Activated CD4-positive, alpha-beta memory T cell treated with anti-CD3 and anti-CD28 coated beads for 36 hours (primary cell): ENCODE measurements at regions of chr4 and their contacts with region 1.

Region 1: DNA sequence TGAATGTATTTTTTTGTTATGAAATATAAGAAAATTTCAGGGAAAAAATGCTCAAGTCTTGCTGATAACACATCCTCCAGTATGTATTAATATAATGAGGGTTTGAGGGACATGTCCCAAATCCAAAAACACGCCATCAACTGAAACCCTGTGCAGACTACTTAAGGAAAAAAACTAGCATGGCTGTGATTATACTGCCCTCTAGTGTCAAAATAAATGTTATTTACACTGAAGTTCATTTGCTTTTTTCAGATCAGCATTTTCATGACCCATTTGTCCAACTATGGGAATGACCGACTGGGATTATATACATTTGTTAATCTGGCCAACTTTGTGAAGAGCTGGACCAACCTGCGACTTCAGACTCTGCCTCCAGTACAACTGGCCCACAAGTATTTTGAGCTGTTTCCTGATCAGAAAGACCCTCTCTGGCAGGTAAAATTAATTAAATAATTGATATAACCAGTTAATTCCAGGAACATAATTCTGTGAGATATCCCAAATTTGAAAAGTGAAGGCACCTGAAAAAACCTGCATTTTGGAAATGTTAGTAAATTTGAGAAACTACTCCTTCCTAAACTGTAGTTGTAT is 128.5 kb downstream of the PRSS12 start:
- DNase-seq: no peak
- H3K4me3 Mint-ChIP-seq: no peak overlapping the region
- H3K27ac Mint-ChIP-seq: no peak overlapping the region
- H3K4me1 Mint-ChIP-seq: no peaks in the 10 kb centered on the region
- H3K27me3 Mint-ChIP-seq: peaks cover 6% of the 10 kb centered on the region

Region 2: DNA sequence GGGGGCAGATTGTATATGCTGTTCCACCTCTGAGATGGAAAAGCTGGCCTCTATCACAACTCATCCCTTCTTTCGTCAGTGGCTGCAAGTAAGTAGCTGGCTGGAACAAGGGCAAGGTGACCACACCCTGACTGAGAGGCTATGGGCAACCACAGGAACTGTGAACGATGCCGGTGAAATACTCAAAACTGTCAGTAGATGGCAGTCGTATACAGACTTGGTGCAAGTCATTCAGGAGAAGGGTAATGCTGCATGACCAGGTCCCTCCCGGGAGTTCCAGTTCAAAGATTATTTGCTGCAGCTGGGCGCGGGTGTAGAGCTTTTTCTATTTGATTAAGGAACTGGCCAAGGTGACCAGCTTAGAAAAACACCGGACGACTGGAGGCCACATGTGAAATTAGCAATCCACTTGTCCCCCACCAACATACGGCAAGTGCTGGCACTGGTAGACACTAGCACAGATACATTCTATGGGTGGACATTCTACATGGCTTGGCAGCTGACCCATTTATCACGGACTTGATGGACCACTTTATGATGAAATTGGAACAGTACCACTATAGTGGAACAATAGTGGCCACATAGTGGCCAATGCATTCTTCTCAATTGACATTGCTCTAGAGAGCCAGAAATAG is 1865.6 kb before region 1 on chr4:
- CTCF ChIA-PET with region 1: interaction called, 3 read pairs
- POLR2A ChIA-PET with region 1: no interaction called
- intact Hi-C with region 1: loop called (anchors 10 kb)
- DNase-seq: peak; percentile 24
- H3K4me3 Mint-ChIP-seq: no peak overlapping the region
- H3K27ac Mint-ChIP-seq: no peak overlapping the region
- H3K4me1 Mint-ChIP-seq: no peaks in the 10 kb centered on the region
- H3K27me3 Mint-ChIP-seq: no peaks in the 10 kb centered on the region

Region 3: DNA sequence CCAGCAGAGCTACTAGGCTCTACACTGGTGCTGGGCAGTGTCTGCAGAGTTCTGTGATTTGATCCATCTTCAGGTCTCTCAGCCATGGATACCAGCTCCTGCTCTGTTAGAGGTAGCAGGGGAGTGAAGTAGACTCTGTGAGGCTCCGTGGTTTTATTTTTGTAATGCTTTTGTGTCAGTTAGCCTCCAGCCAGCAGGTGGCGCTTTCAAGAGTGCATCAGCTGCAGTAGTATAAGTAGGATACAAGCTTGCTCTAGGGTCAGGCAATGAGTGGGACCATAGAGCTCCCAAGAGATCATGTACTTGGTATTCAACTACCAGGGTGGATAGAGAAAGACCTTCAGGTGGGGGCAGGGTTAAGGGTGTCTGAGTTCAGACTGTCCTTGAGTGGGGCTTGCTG is 776.4 kb before region 1 on chr4:
- CTCF ChIA-PET with region 1: interaction called, 3 read pairs
- POLR2A ChIA-PET with region 1: no interaction called
- intact Hi-C with region 1: loop called (anchors 5 kb)
- DNase-seq: peak; percentile 24
- H3K4me3 Mint-ChIP-seq: no peak overlapping the region
- H3K27ac Mint-ChIP-seq: no peak overlapping the region
- H3K4me1 Mint-ChIP-seq: no peaks in the 10 kb centered on the region
- H3K27me3 Mint-ChIP-seq: no peaks in the 10 kb centered on the region

Region 4: GRCh38 chr4:117971403-117971802 is 252.9 kb before region 1 on chr4:
- CTCF ChIA-PET with region 1: no interaction called
- POLR2A ChIA-PET with region 1: no interaction called
- intact Hi-C with region 1: no loop called
- DNase-seq: no peak
- H3K4me3 Mint-ChIP-seq: no peak overlapping the region
- H3K27ac Mint-ChIP-seq: no peak overlapping the region
- H3K4me1 Mint-ChIP-seq: no peaks in the 10 kb centered on the region
- H3K27me3 Mint-ChIP-seq: no peaks in the 10 kb centered on the region

Region 5: DNA sequence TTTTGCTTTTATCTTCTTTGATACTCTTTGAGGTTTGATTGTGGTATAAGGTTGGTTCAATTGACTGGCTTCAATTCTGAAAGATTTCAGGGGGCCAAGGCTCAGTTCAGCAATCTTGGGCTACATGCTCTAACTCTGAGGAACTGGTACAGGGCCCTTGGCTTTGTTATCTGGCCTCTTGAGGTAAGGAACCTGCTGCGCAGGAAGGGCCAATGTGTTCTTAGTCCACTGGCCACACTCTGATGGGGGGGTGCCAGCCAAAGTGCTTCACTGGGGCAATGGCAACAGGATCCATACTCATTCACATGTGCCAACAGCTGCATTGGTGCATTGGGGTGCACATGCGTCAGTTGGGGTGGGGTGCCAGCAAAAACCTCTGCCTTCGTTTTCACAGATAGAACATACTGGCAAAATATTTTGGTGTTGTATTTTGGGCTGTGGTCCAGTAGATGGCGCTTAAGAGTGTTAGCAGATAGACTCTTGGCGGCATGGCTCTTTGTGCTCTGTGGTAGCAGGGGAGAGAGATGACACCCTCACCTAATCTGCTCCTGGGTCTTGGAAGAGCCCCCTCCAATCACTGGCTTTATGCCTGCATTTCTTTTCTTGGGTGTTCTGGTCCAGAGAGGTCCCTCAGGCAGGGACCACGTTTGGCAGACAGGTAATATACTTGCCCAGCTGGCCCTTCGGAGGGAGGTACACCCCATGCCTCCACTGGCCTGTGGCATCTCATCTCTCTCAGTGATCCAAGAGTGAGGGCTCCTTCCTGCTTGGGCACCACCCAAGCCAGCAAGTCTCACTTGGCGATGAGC is 147.2 kb before region 1 on chr4:
- CTCF ChIA-PET with region 1: no interaction called
- POLR2A ChIA-PET with region 1: no interaction called
- intact Hi-C with region 1: loop called (anchors 2 kb)
- DNase-seq: peak; percentile 12
- H3K4me3 Mint-ChIP-seq: no peak overlapping the region
- H3K27ac Mint-ChIP-seq: no peak overlapping the region
- H3K4me1 Mint-ChIP-seq: no peaks in the 10 kb centered on the region
- H3K27me3 Mint-ChIP-seq: peaks cover 4% of the 10 kb centered on the region

Region 6: GRCh38 chr4:118206627-118207026 is 17.7 kb before region 1 on chr4:
- CTCF ChIA-PET with region 1: interaction called, 19 read pairs
- POLR2A ChIA-PET with region 1: no interaction called
- intact Hi-C with region 1: no loop called
- DNase-seq: no peak
- H3K4me3 Mint-ChIP-seq: no peak overlapping the region
- H3K27ac Mint-ChIP-seq: no peak overlapping the region
- H3K4me1 Mint-ChIP-seq: no peaks in the 10 kb centered on the region
- H3K27me3 Mint-ChIP-seq: peaks cover 3% of the 10 kb centered on the region

Region 7: GRCh38 chr4:118235566-118236120 is 11.3 kb after region 1 on chr4:
- CTCF ChIA-PET with region 1: interaction called, 19 read pairs
- POLR2A ChIA-PET with region 1: no interaction called
- intact Hi-C with region 1: no loop called
- DNase-seq: no peak
- H3K4me3 Mint-ChIP-seq: no peak overlapping the region
- H3K27ac Mint-ChIP-seq: no peak overlapping the region
- H3K4me1 Mint-ChIP-seq: no peaks in the 10 kb centered on the region
- H3K27me3 Mint-ChIP-seq: no peaks in the 10 kb centered on the region

Region 8: GRCh38 chr4:118270492-118270891 is 46.2 kb after region 1 on chr4:
- CTCF ChIA-PET with region 1: interaction called, 5 read pairs
- POLR2A ChIA-PET with region 1: no interaction called
- intact Hi-C with region 1: loop called (anchors 2 kb)
- DNase-seq: no peak
- H3K4me3 Mint-ChIP-seq: no peak overlapping the region
- H3K27ac Mint-ChIP-seq: no peak overlapping the region
- H3K4me1 Mint-ChIP-seq: peaks cover 2% of the 10 kb centered on the region
- H3K27me3 Mint-ChIP-seq: peaks cover 1% of the 10 kb centered on the region

Region 9: DNA sequence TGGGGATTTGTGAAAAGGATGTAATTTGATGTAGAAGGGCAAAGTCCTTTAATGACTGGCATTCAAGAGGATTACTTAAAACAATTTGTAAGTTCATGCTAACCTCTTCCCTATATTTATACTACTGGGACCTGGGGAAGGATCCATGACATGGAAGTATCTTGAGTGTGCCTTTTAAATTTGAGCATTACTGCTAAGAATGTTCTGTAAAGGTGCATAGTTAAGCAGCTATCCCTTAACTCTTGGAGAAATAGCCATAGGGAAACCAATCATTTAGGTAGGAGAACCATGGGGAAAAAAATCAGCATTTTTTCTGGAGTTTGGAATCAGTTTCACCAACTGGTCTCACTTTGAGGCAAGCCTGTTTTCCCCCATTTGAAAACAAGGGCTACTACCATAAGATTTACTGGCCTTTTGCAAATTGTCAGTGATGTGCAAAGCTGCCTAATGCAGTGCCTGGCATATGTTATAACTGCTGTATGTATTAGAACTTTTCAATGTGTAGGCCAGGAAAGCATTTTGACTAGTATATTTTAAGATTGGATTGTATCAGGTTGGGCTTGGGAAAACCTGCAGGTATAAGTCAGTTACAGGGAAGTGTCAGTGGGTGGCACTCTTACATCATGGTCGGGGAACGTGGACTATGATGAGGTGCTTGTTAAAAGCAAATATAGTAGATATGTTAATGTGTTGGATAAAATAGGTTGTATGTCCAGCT is 56.3 kb after region 1 on chr4:
- CTCF ChIA-PET with region 1: no interaction called
- POLR2A ChIA-PET with region 1: no interaction called
- intact Hi-C with region 1: no loop called
- DNase-seq: peak; percentile 51
- H3K4me3 Mint-ChIP-seq: peak overlapping the region; percentile 87
- H3K27ac Mint-ChIP-seq: peak overlapping the region; percentile 84
- H3K4me1 Mint-ChIP-seq: peaks cover 46% of the 10 kb centered on the region
- H3K27me3 Mint-ChIP-seq: no peaks in the 10 kb centered on the region